ENCODE measurements at regions of chr10 and their contacts with region 1.

Region 1: DNA sequence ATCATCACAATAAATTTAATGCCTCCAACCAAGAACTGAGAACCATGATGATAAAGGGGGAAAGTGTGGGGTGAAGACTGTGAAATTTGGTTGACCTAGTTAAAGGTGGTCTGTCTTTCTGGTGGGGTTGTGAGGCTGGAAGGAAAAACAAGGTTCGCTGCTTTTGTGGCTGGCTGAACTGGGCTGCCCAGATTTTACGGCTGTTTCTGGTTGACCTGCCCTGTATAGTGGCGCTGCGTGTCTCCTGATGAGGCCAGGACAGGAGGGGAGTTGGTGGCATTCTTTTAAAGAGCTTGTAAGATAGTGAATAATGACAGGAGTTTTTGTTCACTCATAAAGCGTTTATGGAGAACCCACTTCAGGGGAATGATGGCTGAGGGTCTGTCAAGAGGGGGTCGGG is 101.8 kb downstream of the CYP26A1 start:
- DNase-seq: no peak
- H3K4me3 ChIP-seq: no peak overlapping the region
- H3K4me3 Mint-ChIP-seq: no peak overlapping the region
- H3K27ac Mint-ChIP-seq: no peak overlapping the region
- H3K4me1 ChIP-seq: peaks cover 14% of the 10 kb centered on the region; the same call in 1 of the 2 replicates
- H3K4me1 Mint-ChIP-seq: no peaks in the 10 kb centered on the region
- H3K27me3 ChIP-seq: no peaks in the 10 kb centered on the region
- H3K27me3 Mint-ChIP-seq: no peaks in the 10 kb centered on the region
- CTCF ChIP-seq: no peak

Region 2: GRCh38 chr10:93124580-93125318 is 50.7 kb before region 1 on chr10:
- CTCF ChIA-PET with region 1: no interaction called
- POLR2A ChIA-PET with region 1: no interaction called
- intact Hi-C with region 1: loop called (anchors 1 kb)
- DNase-seq: peak; percentile 29 to 45
- H3K4me3 ChIP-seq: no peak overlapping the region
- H3K4me3 Mint-ChIP-seq: no peak overlapping the region
- H3K27ac Mint-ChIP-seq: peak overlapping the region; percentile 47
- H3K4me1 ChIP-seq: peaks cover 37% of the 10 kb centered on the region
- H3K4me1 Mint-ChIP-seq: peaks cover 29% of the 10 kb centered on the region
- H3K27me3 ChIP-seq: no peaks in the 10 kb centered on the region
- H3K27me3 Mint-ChIP-seq: no peaks in the 10 kb centered on the region
- CTCF ChIP-seq: no peak

Region 3: GRCh38 chr10:93208716-93209464 is 33.4 kb after region 1 on chr10:
- CTCF ChIA-PET with region 1: no interaction called
- POLR2A ChIA-PET with region 1: no interaction called
- intact Hi-C with region 1: no loop called
- DNase-seq: no peak
- H3K4me3 ChIP-seq: no peak overlapping the region
- H3K4me3 Mint-ChIP-seq: no peak overlapping the region
- H3K27ac Mint-ChIP-seq: no peak overlapping the region
- H3K4me1 ChIP-seq: no peaks in the 10 kb centered on the region
- H3K4me1 Mint-ChIP-seq: no peaks in the 10 kb centered on the region
- H3K27me3 ChIP-seq: no peaks in the 10 kb centered on the region
- H3K27me3 Mint-ChIP-seq: no peaks in the 10 kb centered on the region
- CTCF ChIP-seq: no peak

Measured in Caco-2 (cell line).